Ascending aorta (tissue), 2 donors: ENCODE measurements at regions of chr1 and their contacts with region 1.

Region 1: DNA sequence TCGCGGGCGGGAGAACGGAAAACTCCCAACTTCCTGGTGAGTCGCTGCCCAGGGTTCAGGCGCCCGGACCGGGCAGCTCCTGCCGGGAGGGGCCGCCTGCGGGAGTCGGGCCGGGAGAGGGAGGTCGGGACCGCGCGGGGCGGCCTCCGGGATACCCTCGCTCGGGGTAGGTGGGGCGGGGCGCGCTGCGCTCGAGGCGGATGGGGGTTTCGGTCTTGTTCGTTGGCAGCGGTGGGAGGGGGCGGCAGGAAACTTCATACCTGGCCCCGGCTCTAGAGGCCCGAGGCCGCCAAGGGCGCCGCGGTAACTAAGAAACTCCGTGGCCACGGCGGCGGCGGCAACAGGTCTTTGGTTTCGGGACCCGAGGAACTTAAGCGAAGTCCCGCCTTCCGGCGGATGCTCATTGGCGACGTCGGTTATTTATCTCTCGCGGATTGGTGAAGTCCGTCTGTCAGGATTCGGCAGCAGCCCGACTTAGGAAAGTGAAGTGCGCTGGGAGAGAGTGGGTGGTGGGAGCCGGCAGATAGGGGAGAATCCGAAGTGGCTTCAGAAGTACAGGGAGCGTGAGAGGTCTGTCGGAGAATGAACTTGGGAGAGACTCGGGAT is 546 bp downstream of the NEK7 start:
- DNase-seq: peak; percentile 75 to 95
- H3K4me3 ChIP-seq: peak overlapping the region; percentile 79 to 90
- H3K27ac ChIP-seq: peak overlapping the region; percentile 96 to 99
- H3K4me1 ChIP-seq: peaks cover 17 to 38% of the 10 kb centered on the region in 2 donors
- H3K27me3 ChIP-seq: no peaks in the 10 kb centered on the region
- CTCF ChIP-seq: no peak

Region 2: GRCh38 chr1:197775282-197776262 is 381.8 kb before region 1 on chr1 and contains the start of gene DENND1B:
- intact Hi-C with region 1: loop called (anchors 10 kb)
- DNase-seq: peak; percentile 23 to 84
- H3K4me3 ChIP-seq: peak within 1 kb of the TSS; percentile 89 to 99
- H3K27ac ChIP-seq: peak within 1 kb of the TSS; percentile 74 to 96
- H3K4me1 ChIP-seq: peaks cover 0 to 9% of the 10 kb centered on the region in 2 donors
- H3K27me3 ChIP-seq: no peaks in the 10 kb centered on the region
- CTCF ChIP-seq: peak in 1 of 3 experiments; percentile 17
- total RNA-seq, gene DENND1B: 12.2 TPM

Region 3: GRCh38 chr1:197902454-197903195 is 254.7 kb before region 1 on chr1 and contains the start of gene C1orf53:
- intact Hi-C with region 1: loop called (anchors 5 kb)
- DNase-seq: peak in 1 of 2 donors; percentile 88
- H3K4me3 ChIP-seq: peak within 1 kb of the TSS; percentile 82 to 92
- H3K27ac ChIP-seq: peak within 1 kb of the TSS; percentile 44 to 55
- H3K4me1 ChIP-seq: peaks cover 0 to 3% of the 10 kb centered on the region in 2 donors
- H3K27me3 ChIP-seq: no peaks in the 10 kb centered on the region
- CTCF ChIP-seq: no peak
- total RNA-seq, gene C1orf53: not detected

Region 4: DNA sequence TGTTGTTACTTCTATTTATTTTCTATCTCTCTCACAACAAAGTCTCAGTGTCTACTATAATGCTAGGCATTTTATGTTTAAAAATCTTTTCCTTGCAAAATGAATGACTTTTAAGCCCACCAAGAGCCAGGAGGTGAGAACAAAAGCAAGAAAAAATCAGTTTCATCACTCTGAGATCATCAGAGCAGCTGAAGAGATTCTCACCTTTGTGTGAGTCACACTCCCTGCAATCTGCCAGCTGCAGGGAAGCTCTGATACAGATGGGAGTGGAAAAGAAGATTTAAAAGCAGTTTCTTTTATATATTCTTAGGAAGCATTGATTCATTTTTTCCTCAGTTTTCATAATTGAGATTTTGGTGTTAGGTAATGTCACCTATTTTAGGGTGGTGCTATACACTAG is 132.6 kb before region 1 on chr1:
- intact Hi-C with region 1: no loop called
- DNase-seq: no peak
- H3K4me3 ChIP-seq: no peak overlapping the region
- H3K27ac ChIP-seq: no peak overlapping the region
- H3K4me1 ChIP-seq: no peaks in the 10 kb centered on the region
- H3K27me3 ChIP-seq: no peaks in the 10 kb centered on the region
- CTCF ChIP-seq: no peak

Region 5: GRCh38 chr1:198088360-198089071 is 68.8 kb before region 1 on chr1:
- intact Hi-C with region 1: loop called (anchors 2 kb)
- DNase-seq: no peak
- H3K4me3 ChIP-seq: no peak overlapping the region
- H3K27ac ChIP-seq: no peak overlapping the region
- H3K4me1 ChIP-seq: peaks cover 0 to 2% of the 10 kb centered on the region in 2 donors
- H3K27me3 ChIP-seq: no peaks in the 10 kb centered on the region
- CTCF ChIP-seq: peak; percentile 38 to 74 (median 45)

Region 6: GRCh38 chr1:198107041-198107440 is 50.3 kb before region 1 on chr1:
- intact Hi-C with region 1: no loop called
- DNase-seq: no peak
- H3K4me3 ChIP-seq: no peak overlapping the region
- H3K27ac ChIP-seq: no peak overlapping the region
- H3K4me1 ChIP-seq: no peaks in the 10 kb centered on the region
- H3K27me3 ChIP-seq: no peaks in the 10 kb centered on the region
- CTCF ChIP-seq: no peak

Region 7: GRCh38 chr1:198118134-198118533 is 39.2 kb before region 1 on chr1:
- intact Hi-C with region 1: loop called (anchors 2 kb)
- DNase-seq: peak in 1 of 2 donors; percentile 91
- H3K4me3 ChIP-seq: no peak overlapping the region
- H3K27ac ChIP-seq: peak overlapping the region; percentile 61 to 83
- H3K4me1 ChIP-seq: peaks cover 0 to 26% of the 10 kb centered on the region in 2 donors
- H3K27me3 ChIP-seq: no peaks in the 10 kb centered on the region
- CTCF ChIP-seq: no peak

Region 8: GRCh38 chr1:198167436-198167934 is 10.1 kb after region 1 on chr1:
- intact Hi-C with region 1: no loop called
- DNase-seq: no peak
- H3K4me3 ChIP-seq: no peak overlapping the region
- H3K27ac ChIP-seq: no peak overlapping the region
- H3K4me1 ChIP-seq: peaks cover 0 to 43% of the 10 kb centered on the region in 2 donors
- H3K27me3 ChIP-seq: no peaks in the 10 kb centered on the region
- CTCF ChIP-seq: no peak

Region 9: DNA sequence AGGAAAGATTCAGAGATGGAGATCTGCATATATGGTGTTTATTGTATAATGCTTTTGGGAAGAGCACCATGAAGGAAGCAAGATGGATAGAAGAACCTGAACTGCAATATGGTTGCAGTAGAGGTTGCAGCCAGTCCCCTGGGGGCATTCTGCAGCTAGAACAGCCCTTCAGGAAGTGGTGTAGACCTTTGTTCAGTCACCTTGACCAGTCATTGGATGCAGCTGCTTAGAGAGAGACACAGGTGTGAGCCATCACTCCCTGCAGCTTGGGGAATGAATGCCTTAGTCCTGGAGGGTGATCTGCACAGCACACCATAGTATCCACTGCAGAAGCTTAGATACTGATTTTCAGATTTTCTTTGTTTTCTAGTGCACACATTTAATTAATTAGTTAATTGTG is 41.8 kb after region 1 on chr1:
- intact Hi-C with region 1: no loop called
- DNase-seq: no peak
- H3K4me3 ChIP-seq: no peak overlapping the region
- H3K27ac ChIP-seq: no peak overlapping the region
- H3K4me1 ChIP-seq: peaks cover 3 to 30% of the 10 kb centered on the region in 2 donors
- H3K27me3 ChIP-seq: no peaks in the 10 kb centered on the region
- CTCF ChIP-seq: no peak

Region 10: GRCh38 chr1:198265073-198265661 is 107.8 kb after region 1 on chr1:
- intact Hi-C with region 1: loop called (anchors 10 kb)
- DNase-seq: no peak
- H3K4me3 ChIP-seq: no peak overlapping the region
- H3K27ac ChIP-seq: no peak overlapping the region
- H3K4me1 ChIP-seq: peaks cover 0 to 16% of the 10 kb centered on the region in 2 donors
- H3K27me3 ChIP-seq: no peaks in the 10 kb centered on the region
- CTCF ChIP-seq: no peak